ENCODE measurements at regions of chr12 and their contacts with region 1.

Region 1: GRCh38 chr12:47963340-47964040 is at the start of gene TMEM106C:
- DNase-seq: peak; percentile 72
- ATAC-seq: peak; percentile 99
- H3K4me3 ChIP-seq: peak within 1 kb of the TSS; percentile 84 to 94
- H3K27ac ChIP-seq: peak within 1 kb of the TSS; percentile 85
- H3K4me1 ChIP-seq: peaks cover 13% of the 10 kb centered on the region
- H3K27me3 ChIP-seq: no peaks in the 10 kb centered on the region
- CTCF ChIP-seq: peak; percentile 99
- total RNA-seq, gene TMEM106C: 93.7 TPM

Region 2: GRCh38 chr12:46043972-46044520 is 1919.4 kb before region 1 on chr12:
- CTCF ChIA-PET with region 1: no interaction called
- POLR2A ChIA-PET with region 1: no interaction called
- in situ Hi-C with region 1: no loop called
- intact Hi-C with region 1: no loop called
- DNase-seq: no peak
- ATAC-seq: no peak
- H3K4me3 ChIP-seq: no peak overlapping the region
- H3K27ac ChIP-seq: no peak overlapping the region
- H3K4me1 ChIP-seq: no peaks in the 10 kb centered on the region
- H3K27me3 ChIP-seq: no peaks in the 10 kb centered on the region
- CTCF ChIP-seq: no peak

Region 3: DNA sequence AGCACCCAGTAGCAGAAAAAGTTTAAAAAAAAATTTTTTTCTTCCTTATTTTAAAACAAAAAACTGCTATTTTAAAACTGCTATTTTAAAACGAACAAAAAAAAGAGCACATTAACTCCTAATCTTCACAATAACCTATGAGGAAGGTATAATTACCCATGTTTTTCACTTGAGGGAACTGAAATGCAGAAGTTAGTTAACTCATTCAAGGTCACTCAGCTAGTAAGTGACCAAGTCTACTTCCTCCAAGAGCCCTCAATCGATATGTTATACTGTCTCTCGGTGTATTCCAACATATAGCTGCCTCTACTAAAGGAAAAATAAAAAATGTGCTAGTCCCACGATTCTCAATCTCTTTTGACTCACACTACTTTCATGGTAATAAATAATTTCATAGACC is 265.4 kb before region 1 on chr12:
- CTCF ChIA-PET with region 1: no interaction called
- POLR2A ChIA-PET with region 1: no interaction called
- in situ Hi-C with region 1: no loop called
- intact Hi-C with region 1: no loop called
- DNase-seq: no peak
- ATAC-seq: no peak
- H3K4me3 ChIP-seq: no peak overlapping the region
- H3K27ac ChIP-seq: no peak overlapping the region
- H3K4me1 ChIP-seq: no peaks in the 10 kb centered on the region
- H3K27me3 ChIP-seq: no peaks in the 10 kb centered on the region
- CTCF ChIP-seq: no peak

Region 4: DNA sequence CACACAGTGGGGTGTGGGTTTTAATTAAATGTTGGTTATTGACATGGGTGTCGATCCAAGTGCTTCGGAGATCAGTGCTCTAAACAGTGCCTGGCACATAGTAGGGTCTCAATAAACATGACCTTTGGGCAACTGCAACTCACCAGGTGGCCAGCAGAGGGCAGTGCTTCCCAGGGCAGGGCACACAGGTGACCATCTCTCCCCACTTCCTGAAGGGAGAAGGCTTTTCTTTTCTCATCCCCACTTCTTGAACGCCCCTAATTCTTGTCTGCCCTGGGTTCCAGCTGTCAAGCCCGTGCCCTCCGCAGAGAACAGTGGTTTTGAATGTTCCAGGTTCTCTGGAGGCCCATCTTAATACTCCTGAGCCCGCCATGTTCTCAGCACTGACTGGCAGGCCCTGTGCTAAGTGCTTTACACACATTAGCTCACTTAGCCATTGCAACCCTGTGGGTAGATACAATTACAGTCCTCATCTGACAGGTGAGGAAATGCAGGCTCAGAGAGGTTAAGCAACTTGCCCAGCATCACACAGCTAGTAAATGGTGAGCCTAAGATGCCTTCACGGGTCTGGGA is 221.2 kb before region 1 on chr12:
- CTCF ChIA-PET with region 1: no interaction called
- POLR2A ChIA-PET with region 1: no interaction called
- in situ Hi-C with region 1: no loop called
- intact Hi-C with region 1: no loop called
- DNase-seq: peak; percentile 65
- ATAC-seq: peak; percentile 69
- H3K4me3 ChIP-seq: no peak overlapping the region
- H3K27ac ChIP-seq: no peak overlapping the region
- H3K4me1 ChIP-seq: no peaks in the 10 kb centered on the region; the same call in 1 of the 2 replicates
- H3K27me3 ChIP-seq: no peaks in the 10 kb centered on the region
- CTCF ChIP-seq: peak; percentile 99

Region 5: DNA sequence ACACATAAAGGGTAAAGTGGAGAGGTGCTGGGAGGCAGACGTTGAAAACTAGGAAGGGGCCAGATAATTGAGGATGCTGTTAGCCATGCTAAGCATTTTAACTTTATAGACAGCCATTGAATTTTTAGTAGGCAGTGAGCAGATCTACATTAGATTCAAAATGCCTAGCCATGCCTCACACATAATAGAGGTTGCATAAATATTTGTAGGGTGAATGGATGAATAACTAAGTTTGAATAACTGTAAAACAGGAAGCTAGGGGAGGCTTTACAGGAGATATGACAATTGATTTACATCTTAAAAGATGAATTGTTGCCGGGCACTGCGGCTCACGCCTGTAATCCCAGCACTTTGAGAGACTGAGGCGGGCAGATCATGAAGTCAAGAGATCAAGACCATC is 765.3 kb after region 1 on chr12:
- CTCF ChIA-PET with region 1: no interaction called
- POLR2A ChIA-PET with region 1: interaction called, 16 read pairs
- in situ Hi-C with region 1: no loop called
- intact Hi-C with region 1: no loop called
- DNase-seq: no peak
- ATAC-seq: no peak
- H3K4me3 ChIP-seq: no peak overlapping the region
- H3K27ac ChIP-seq: no peak overlapping the region
- H3K4me1 ChIP-seq: no peaks in the 10 kb centered on the region
- H3K27me3 ChIP-seq: no peaks in the 10 kb centered on the region
- CTCF ChIP-seq: no peak